Activated T-helper 1 cell treated with anti-CD3 and anti-CD28 coated beads, Interleukin-12 subunit alpha, Interleukin-12 subunit beta, Interleukin-2, Interleukin-4 antibody, amounts not matched to agents 30 ng/mL and 10 ng/mL and 1 ng/mL, durations not matched to agents 14 hours and 24 hours and 36 hours (primary cell): ENCODE measurements at regions of chr3 and their contacts with region 1.

Region 1: GRCh38 chr3:196073188-196073838 is 8.6 kb downstream of the TFRC start:
- DNase-seq: peak; percentile 60
- H3K4me3 Mint-ChIP-seq: peak overlapping the region; percentile 24
- H3K27ac Mint-ChIP-seq: peak overlapping the region; percentile 79
- H3K4me1 Mint-ChIP-seq: peaks cover 63% of the 10 kb centered on the region
- H3K27me3 Mint-ChIP-seq: no peaks in the 10 kb centered on the region

Region 2: DNA sequence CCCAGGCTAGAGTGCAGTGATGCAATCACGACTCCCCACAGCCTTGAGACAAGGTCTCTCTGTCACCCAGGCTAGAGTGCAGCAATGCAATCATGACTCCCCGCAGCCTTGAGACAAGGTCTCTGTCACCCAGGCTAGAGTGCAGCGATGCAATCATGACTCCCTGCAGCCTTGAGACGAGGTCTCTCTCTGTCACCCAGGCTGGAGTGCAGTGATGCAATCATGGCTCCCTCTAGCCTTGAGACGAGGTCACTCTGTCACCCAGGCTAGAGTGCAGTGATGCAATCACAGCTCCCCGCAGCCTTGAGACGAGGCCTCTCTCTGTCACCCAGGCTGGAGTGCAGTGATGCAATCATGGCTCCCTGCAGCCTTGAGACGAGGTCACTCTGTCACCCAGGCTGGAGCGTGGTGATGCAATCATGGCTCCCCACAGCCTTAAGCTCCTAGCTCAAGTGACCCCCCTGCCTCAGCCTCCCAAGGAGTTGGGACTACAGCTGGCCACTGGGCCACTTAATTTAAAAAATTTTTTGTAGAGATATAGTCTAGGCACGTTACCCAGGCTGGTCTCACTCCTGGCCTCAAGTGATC is 17.5 kb before region 1 on chr3:
- intact Hi-C with region 1: loop called (anchors 2 kb)
- DNase-seq: no peak
- H3K4me3 Mint-ChIP-seq: no peak overlapping the region
- H3K27ac Mint-ChIP-seq: peak overlapping the region; percentile 65
- H3K4me1 Mint-ChIP-seq: peaks cover 27% of the 10 kb centered on the region
- H3K27me3 Mint-ChIP-seq: no peaks in the 10 kb centered on the region